Activated CD4-positive, alpha-beta T cell treated with anti-CD3 and anti-CD28 coated beads, Interleukin-2, amount 10 ng/mL, durations not matched to agents 24 days and 14 days (primary cell): ENCODE measurements at regions of chr19 and their contacts with region 1.

Region 1: GRCh38 chr19:49640113-49640898 is at the start of gene RRAS:
- DNase-seq: peak; percentile 100
- H3K4me3 Mint-ChIP-seq: peak within 1 kb of the TSS; percentile 97
- H3K27ac Mint-ChIP-seq: peak within 1 kb of the TSS; percentile 100
- H3K4me1 Mint-ChIP-seq: peaks cover 52% of the 10 kb centered on the region
- H3K27me3 Mint-ChIP-seq: no peaks in the 10 kb centered on the region
- total RNA-seq, gene RRAS: 4.1 and 5.0 TPM in 2 replicates

Region 2: DNA sequence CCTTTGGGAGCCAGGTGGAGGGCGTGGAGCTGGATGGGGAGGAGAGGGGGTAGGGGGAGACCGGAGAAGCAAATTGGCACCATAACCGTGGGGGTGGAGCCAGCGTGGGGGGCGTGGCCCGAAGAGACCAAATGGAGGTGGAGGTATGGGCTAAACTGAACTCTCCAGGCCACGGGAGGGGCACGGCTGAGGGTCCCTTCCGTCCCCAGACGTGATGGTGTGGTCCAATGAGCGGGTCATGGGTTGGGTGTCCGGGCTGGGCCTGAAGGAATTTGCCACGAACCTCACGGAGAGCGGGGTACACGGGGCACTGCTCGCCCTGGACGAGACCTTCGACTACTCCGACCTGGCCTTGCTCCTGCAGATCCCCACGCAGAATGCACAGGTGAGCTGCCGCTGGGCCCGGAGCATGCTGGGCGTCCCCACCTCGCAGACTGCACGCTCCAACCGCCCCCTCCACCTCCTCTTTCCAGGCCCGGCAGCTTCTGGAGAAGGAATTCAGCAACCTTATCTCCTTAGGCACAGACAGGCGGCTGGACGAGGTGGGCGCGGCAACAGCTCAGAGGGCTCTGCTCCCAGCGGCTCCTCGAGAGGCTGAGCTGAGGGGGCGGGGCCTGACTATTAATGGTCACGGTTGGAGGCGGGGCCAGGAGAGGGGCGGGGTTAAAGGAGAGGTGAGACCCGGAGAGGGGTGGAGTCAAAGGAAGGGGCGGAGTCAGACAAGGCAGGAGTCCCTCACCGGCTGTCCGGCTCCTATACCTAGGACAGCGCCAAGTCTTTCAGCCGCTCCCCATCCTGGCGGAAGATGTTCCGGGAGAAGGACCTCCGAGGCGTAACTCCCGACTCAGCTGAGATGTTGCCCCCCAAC is 491.3 kb before region 1 on chr19:
- intact Hi-C with region 1: no loop called
- DNase-seq: peak; percentile 94
- H3K4me3 Mint-ChIP-seq: peak overlapping the region; percentile 90
- H3K27ac Mint-ChIP-seq: no peak overlapping the region
- H3K4me1 Mint-ChIP-seq: peaks cover 23% of the 10 kb centered on the region
- H3K27me3 Mint-ChIP-seq: peaks cover 59% of the 10 kb centered on the region

Region 3: GRCh38 chr19:49451430-49452181 is 188.7 kb before region 1 on chr19 and contains the start of gene PIH1D1:
- intact Hi-C with region 1: loop called (anchors 5 kb)
- DNase-seq: peak; percentile 98
- H3K4me3 Mint-ChIP-seq: peak within 1 kb of the TSS; percentile 91
- H3K27ac Mint-ChIP-seq: peak within 1 kb of the TSS; percentile 100
- H3K4me1 Mint-ChIP-seq: peaks cover 38% of the 10 kb centered on the region
- H3K27me3 Mint-ChIP-seq: no peaks in the 10 kb centered on the region
- total RNA-seq, gene PIH1D1: 134 and 135 TPM in 2 replicates

Region 4: DNA sequence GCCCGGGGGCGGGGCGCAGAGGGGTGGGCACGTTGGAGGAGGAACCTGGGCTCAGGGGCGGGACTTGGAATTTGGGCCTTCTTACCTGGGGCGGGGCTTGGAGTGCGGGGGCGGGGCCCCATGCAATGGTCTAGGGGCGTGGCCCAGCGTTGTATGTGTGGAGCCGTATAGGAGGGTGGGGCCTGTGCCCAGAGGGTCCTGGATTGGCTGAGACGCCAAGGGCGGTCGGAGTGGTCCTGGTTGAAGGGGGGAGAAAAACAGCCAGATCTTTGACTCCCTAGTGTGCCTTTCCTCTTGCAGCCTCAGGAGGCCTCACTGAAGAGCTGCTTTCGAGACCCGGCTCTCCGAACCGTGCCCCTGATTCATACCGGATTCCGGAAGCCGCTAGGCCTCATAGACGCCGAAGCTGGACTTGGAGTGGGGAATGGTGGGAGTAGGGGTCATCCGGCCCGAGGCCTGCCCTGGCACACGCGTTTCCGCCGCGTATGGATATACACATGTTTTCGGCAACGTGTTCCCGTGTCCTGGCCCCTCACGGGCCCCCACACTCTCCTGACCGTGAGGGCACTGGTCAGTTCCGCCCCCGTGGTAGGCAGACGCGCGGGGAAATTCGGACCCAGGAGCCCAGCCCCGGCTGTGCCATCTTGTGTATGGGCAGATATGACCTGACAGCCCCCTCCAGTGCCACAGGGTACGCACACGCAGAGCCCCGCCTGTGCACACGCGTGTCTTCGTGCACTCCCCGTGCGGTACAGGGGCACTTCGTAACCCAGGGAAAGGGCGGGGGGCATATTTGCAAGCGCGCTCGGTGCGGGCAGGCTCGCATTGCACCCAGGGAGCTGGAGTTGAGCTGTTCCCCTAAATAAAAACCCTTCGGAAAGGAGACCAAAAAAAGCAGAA is 50.0 kb before region 1 on chr19:
- intact Hi-C with region 1: loop called (anchors 1 kb)
- DNase-seq: peak; percentile 98
- H3K4me3 Mint-ChIP-seq: peak overlapping the region; percentile 88
- H3K27ac Mint-ChIP-seq: peak overlapping the region; percentile 67
- H3K4me1 Mint-ChIP-seq: peaks cover 30% of the 10 kb centered on the region
- H3K27me3 Mint-ChIP-seq: peaks cover 11% of the 10 kb centered on the region

Region 5: GRCh38 chr19:49676690-49677231 is 36.5 kb after region 1 on chr19:
- intact Hi-C with region 1: loop called (anchors 1 kb)
- DNase-seq: peak; percentile 99
- H3K4me3 Mint-ChIP-seq: peak overlapping the region; percentile 95
- H3K27ac Mint-ChIP-seq: peak overlapping the region; percentile 99
- H3K4me1 Mint-ChIP-seq: peaks cover 31% of the 10 kb centered on the region
- H3K27me3 Mint-ChIP-seq: no peaks in the 10 kb centered on the region

Region 6: GRCh38 chr19:49850473-49851342 is 210.4 kb after region 1 on chr19 and contains the start of gene PTOV1:
- intact Hi-C with region 1: loop called (anchors 2 kb)
- DNase-seq: peak; percentile 98
- H3K4me3 Mint-ChIP-seq: peak within 1 kb of the TSS; percentile 91
- H3K27ac Mint-ChIP-seq: peak within 1 kb of the TSS; percentile 96
- H3K4me1 Mint-ChIP-seq: peaks cover 38% of the 10 kb centered on the region
- H3K27me3 Mint-ChIP-seq: peaks cover 4% of the 10 kb centered on the region
- total RNA-seq, gene PTOV1: 121 and 124 TPM in 2 replicates